Sciatic nerve (tissue), 2 donors: ENCODE measurements at regions of chr9 and their contacts with region 1.

Region 1: GRCh38 chr9:120714088-120714845 is at the start of gene MEGF9:
- DNase-seq: peak; percentile 99
- ATAC-seq: peak; percentile 98
- total RNA-seq, gene MEGF9: 132 TPM

Region 2: DNA sequence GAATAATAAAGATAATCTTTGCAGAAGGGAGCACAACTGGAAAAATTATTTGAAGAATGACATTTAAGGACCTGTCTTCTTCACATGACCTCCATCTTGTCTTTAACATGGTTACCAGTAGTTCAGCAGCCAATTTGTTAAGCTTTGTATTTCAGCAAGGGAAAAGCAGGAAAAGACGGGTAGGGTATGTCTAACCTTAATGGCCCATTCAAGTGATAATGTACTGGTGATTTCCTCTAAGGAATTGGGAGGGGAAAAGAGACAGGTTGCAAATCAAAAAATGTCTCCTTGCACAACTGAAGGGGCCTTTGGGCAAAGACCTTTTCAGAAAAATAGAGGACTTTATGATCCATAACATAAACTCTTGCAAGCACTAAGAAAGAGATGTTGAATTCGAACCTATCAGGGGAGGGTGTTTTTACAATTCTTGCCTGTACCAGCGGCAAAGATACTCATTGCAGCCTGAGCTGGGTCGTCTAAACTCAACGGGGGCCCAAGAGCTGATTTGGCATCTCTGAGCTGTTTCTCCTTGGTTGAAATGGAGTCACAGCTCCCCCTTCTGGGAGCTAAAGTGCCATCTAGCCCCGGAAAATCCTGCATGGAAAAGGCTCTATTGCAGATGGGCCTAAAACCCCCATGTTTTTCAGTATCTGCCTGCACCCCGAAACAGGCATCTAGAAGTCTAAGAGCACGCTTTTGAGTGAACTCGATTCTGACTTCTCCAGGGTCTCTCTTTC is 1348.8 kb before region 1 on chr9:
- intact Hi-C with region 1: no loop called
- DNase-seq: no peak
- ATAC-seq: no peak

Region 3: DNA sequence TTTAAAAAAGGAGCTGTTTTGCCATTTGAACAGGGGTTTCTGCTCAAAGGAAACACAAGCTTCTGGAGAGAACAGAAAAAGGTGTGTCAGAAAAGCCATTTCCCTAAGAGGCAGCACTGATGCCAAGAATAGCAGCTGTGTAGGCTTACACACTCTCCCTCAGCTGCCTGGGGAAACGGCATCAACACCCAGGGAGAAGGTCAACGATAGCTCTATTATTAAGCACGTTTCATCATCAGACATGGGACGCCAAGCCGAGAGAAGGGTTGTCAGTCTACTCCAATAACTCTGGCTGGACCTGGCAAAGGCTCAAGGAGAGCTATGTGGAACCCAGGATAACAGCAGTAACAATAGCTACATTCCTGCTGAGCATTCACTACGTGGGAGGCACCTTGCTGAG is 448.5 kb before region 1 on chr9:
- intact Hi-C with region 1: no loop called
- DNase-seq: no peak
- ATAC-seq: no peak

Region 4: DNA sequence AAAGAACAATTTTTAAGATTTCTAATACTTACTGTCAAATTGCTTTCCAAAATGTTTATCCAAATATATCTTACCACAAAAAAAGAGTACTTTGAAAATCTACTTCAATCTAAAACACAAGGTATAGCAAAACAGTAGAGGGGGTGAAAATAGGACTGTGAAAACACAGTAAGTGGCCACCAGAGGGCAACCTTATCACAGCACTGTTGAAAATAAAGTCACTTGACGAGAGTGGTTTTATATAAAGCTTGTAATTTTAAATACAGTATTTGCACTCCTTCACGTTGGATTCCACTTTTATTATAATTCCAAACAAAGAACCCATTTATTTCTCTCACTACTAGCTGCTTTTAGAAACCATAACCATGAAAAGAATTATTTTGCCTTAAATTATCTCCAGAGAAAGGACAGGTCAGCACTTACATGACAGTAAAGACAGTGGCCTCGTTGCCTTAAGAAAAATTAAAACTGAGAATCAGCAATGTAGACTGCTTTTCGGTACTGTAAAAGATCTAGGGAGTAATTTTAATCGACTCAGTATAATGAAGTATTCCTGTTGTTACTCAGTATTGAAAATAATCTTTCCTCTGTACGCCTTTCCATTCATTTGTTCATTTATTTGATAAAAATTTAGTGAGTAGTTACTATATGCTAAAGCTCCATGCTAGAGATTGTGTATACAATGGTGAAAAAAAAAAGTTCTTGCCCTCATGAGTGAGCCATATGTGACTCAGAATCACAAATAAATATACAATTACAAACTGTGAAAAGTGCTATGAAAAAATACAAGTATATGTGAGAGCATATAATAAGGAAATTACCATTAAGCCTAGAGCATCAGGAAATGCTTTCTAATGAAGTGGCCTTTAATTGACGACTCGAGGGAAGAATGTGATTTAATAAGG is 94.3 kb before region 1 on chr9:
- intact Hi-C with region 1: loop called (anchors 10 kb)
- DNase-seq: peak; percentile 74
- ATAC-seq: peak; percentile 85